ENCODE measurements at regions of chr13 and their contacts with region 1.

Region 1: DNA sequence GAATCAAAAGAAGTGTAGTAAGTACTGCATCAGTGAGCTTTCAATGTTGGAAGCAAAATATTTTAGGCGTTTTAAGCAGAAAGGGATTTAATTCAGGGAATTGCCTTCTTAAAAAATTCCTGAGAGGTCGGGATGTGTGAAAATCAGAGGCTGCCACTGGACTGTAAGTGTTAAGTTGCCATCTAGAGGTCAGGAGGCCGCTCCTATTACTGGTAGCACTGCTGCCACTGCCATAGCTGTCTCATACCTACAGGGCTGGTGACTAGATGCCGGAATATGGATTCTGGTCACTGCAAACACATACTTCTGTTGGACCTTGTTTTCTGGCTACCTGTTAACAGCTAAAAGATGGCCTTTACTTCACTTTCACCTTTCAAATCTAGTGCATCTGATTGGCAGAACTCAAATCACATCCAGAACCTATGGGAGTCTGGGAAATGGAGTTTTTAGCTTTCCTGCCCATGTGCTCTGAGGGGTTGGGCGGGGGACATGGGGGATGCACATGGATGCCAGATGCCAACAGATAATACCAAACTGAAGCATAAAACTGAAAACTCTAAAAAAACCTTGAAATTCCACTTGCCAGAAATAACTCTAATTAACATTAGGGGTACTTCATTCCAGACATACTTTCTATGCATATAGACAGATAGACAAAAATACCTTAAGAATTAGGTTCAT is 29.8 kb downstream of the DGKH start:
- DNase-seq: no peak
- CTCF ChIP-seq: no peak

Region 2: GRCh38 chr13:42056146-42056545 is 22.1 kb before region 1 on chr13:
- CTCF ChIA-PET with region 1: interaction called, 34 read pairs
- POLR2A ChIA-PET with region 1: no interaction called
- DNase-seq: no peak
- CTCF ChIP-seq: no peak

Region 3: GRCh38 chr13:42094516-42095040 is 16.3 kb after region 1 on chr13:
- CTCF ChIA-PET with region 1: no interaction called
- POLR2A ChIA-PET with region 1: no interaction called
- DNase-seq: no peak
- CTCF ChIP-seq: no peak